ENCODE measurements at regions of chr17 and their contacts with region 1.

Region 1: GRCh38 chr17:50094753-50095619 is at the start of gene PDK2:
- DNase-seq: peak; percentile 98 to 99
- ATAC-seq: peak; percentile 67 to 94
- H3K4me3 ChIP-seq: peak within 1 kb of the TSS; percentile 76
- H3K27ac ChIP-seq: peak within 1 kb of the TSS; percentile 82 to 90
- H3K4me1 ChIP-seq: peaks cover 20% of the 10 kb centered on the region
- CTCF ChIP-seq: no peak
- EP300 ChIP-seq: no peak
- POLR2A ChIP-seq: peak; percentile 46
- RAD21 ChIP-seq: no peak
- polyA plus RNA-seq, gene PDK2: 28.5 and 34.4 TPM in 2 replicates

Region 2: DNA sequence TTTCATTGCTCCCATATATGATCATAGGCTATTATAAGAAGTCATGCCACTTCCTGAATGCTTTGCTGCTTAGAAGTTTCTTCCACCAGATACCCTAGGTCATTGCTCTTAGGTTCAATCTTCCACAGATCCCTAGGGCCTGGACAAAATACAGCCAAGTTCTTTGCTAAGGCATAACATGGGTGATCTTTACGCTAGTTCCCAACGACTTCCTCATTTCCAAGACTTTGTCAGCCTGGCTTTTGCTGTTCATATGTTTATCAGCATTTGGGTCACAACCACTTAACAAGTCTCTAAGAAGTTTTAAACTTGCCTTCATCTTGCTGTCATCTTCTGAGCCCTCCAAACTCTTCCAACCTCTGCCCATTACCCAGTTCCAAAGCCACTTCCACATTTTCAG is 79.8 kb before region 1 on chr17:
- CTCF ChIA-PET with region 1: interaction called, 21 read pairs
- POLR2A ChIA-PET with region 1: no interaction called
- DNase-seq: no peak
- ATAC-seq: no peak
- H3K4me3 ChIP-seq: no peak overlapping the region
- H3K27ac ChIP-seq: no peak overlapping the region
- H3K4me1 ChIP-seq: no peaks in the 10 kb centered on the region
- CTCF ChIP-seq: no peak
- EP300 ChIP-seq: no peak
- POLR2A ChIP-seq: no peak
- RAD21 ChIP-seq: no peak

Region 3: DNA sequence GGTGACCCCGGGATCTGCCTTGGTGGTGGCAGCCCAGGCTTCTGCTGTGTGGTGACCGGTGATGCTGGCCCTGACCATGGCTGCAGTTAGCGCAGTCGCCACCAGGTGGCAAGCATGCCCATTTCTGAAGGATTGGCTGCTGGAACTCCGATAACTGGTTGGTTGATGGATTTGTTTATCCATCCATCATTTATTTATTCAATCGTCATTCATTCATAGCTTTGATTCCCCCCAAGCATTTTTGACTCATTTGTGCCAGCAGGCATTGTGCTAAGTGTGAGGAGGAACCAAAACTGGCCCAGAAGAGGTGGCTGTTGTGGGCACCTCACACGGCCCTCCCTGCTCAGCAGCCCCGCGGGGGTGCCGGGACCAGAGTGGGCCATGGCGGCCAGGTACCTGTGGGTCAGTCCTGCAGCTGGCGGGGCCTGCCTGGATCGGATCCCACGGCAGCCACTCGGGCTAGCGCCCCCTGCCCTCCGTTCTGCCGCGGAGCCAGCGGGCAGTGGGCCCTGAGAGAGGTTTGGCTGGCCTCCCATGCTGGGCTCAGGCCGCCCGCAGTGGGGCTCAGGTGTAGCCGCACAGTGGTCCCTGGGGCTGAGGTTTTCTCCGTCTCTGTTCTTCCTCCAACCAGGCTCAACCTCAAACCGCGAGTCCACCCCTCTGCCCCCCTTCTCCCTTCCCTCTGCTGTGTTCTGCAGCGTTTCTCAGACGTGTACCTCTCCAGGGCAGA is 67.9 kb before region 1 on chr17:
- CTCF ChIA-PET with region 1: interaction called, 190 read pairs
- POLR2A ChIA-PET with region 1: interaction called, 6 read pairs
- DNase-seq: peak; percentile 91 to 95
- ATAC-seq: peak; percentile 48 to 76
- H3K4me3 ChIP-seq: peak overlapping the region; percentile 46
- H3K27ac ChIP-seq: peak overlapping the region; percentile 94 to 99
- H3K4me1 ChIP-seq: peaks cover 42% of the 10 kb centered on the region
- CTCF ChIP-seq: peak; percentile 97
- EP300 ChIP-seq: no peak
- POLR2A ChIP-seq: no peak
- RAD21 ChIP-seq: peak; percentile 98

Region 4: DNA sequence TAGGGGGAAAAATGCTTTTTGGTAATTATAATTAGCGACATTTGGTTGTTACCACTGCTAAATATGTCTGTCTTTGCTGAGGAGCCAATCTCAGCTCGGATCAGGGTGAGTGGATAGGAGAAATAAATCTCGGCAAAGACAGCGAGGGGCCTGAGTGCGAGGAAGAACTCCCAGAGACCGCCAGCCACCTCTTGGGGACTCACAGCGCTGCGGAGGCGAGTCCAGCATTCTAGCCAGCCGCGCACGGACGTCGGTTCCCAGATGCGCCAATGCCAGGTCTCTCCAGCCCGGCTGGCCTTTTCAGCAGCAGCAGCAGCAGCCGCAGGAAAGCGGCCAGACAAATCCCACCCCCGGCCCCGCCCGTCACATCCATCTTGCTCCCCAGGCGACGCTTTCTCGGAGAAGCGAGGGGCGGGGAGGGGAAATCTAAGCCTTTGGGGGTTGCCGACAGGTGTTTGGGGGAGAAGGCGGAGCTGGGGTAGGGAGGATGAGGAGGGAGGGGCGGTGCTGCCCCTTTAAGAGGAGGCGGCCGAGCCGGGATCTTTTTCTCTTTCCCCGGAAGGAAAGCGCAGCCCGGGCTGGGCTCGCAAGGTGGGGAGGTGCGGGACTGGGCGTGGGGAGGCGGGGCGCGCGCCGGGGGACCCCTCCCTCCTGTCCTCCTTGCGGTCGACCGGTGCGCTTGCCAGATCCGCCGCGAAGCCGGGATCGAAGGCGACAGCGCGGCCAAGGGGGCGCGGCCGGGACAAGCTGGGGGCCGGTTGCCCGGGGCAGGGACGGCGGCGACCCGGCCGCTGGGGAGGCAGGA is 39.4 kb before region 1 on chr17 and contains the start of gene ITGA3:
- CTCF ChIA-PET with region 1: interaction called, 285 read pairs
- POLR2A ChIA-PET with region 1: interaction called, 21 read pairs
- DNase-seq: peak; percentile 93 to 96
- ATAC-seq: peak; percentile 57 to 73
- H3K4me3 ChIP-seq: peak within 1 kb of the TSS; percentile 77
- H3K27ac ChIP-seq: peak within 1 kb of the TSS; percentile 92 to 97
- H3K4me1 ChIP-seq: peaks cover 74% of the 10 kb centered on the region
- CTCF ChIP-seq: no peak
- EP300 ChIP-seq: 0 out of 5 replicates have a peak, but pooled peaks of 1 of the 2 experiments have one; percentile 15
- POLR2A ChIP-seq: peak; percentile 95
- RAD21 ChIP-seq: peak; percentile 2 to 35; a peak in 1 of 5 replicates
- polyA plus RNA-seq, gene ITGA3: 141 and 181 TPM in 2 replicates

Region 5: GRCh38 chr17:50151041-50151936 is 56.3 kb after region 1 on chr17:
- CTCF ChIA-PET with region 1: interaction called, 1,356 read pairs
- POLR2A ChIA-PET with region 1: interaction called, 9 read pairs
- DNase-seq: peak; percentile 96 to 97
- ATAC-seq: peak; percentile 71 to 78
- H3K4me3 ChIP-seq: peak overlapping the region; percentile 86
- H3K27ac ChIP-seq: peak overlapping the region; percentile 96 to 98
- H3K4me1 ChIP-seq: peaks cover 49% of the 10 kb centered on the region
- CTCF ChIP-seq: peak; percentile 36; the same call in 1 of the 3 replicates
- EP300 ChIP-seq: no peak
- POLR2A ChIP-seq: peak; percentile 73
- RAD21 ChIP-seq: no peak; a peak in 1 of 5 replicates

Region 6: GRCh38 chr17:50169121-50169764 is 74.3 kb after region 1 on chr17:
- CTCF ChIA-PET with region 1: interaction called, 18 read pairs
- POLR2A ChIA-PET with region 1: no interaction called
- DNase-seq: peak; percentile 59 to 85
- ATAC-seq: peak; percentile 49 to 77
- H3K4me3 ChIP-seq: no peak overlapping the region
- H3K27ac ChIP-seq: peak overlapping the region; percentile 41 to 55; a peak in 5 of 6 replicates
- H3K4me1 ChIP-seq: peaks cover 25% of the 10 kb centered on the region
- CTCF ChIP-seq: peak; percentile 97
- EP300 ChIP-seq: no peak
- POLR2A ChIP-seq: no peak
- RAD21 ChIP-seq: peak; percentile 98 to 99

Region 7: GRCh38 chr17:50297407-50297865 is 202.4 kb after region 1 on chr17:
- CTCF ChIA-PET with region 1: interaction called, 74 read pairs
- POLR2A ChIA-PET with region 1: no interaction called
- DNase-seq: peak; percentile 81 to 90
- ATAC-seq: peak; percentile 93 to 99
- H3K4me3 ChIP-seq: no peak overlapping the region
- H3K27ac ChIP-seq: no peak overlapping the region
- H3K4me1 ChIP-seq: no peaks in the 10 kb centered on the region
- CTCF ChIP-seq: peak; percentile 99
- EP300 ChIP-seq: no peak
- POLR2A ChIP-seq: no peak
- RAD21 ChIP-seq: peak; percentile 100